ENCODE measurements at regions of chr5 and their contacts with region 1.

Region 1: DNA sequence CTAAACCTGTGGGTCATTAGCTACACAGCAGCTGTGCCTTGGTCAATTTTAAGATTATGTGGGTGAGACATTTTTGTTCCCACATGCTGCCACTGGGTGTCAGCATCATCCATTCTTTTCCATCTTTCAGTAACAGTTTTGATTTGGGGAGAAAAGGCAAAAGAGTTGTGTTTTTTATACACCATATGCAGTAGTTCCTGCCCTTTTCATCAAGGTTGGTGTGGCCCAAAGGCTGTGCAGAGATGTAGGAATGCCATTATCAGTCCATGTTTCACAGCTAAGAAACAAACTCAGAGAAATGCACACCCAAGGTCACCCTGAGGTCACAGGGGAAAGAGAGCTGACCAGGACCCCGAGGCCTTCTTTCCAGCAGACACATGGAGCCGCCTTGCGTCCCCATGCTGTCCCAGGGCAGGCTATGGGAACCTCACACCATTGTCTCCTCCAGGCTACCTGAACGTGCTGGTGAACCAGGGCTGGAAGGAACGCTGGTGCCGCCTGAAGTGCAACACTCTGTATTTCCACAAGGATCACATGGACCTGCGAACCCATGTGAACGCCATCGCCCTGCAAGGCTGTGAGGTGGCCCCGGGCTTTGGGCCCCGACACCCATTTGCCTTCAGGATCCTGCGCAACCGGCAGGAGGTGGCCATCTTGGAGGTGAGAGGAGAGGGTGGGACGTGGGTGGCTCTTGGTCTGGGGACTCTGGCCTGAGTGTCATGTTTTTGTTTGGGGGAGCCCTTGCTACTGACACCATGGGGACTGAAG is 27.8 kb upstream of the GRPEL2 start:
- DNase-seq: peak; percentile 76
- H3K4me3 ChIP-seq: no peak overlapping the region
- H3K27ac ChIP-seq: peak overlapping the region in 1 of 2 experiments; percentile 63; a peak in 2 of 4 replicates
- H3K4me1 ChIP-seq: peaks cover 13 to 20% of the 10 kb centered on the region in 2 experiments
- H3K27me3 ChIP-seq: no peaks in the 10 kb centered on the region
- CTCF ChIP-seq: peak; percentile 75
- EP300 ChIP-seq: no peak
- RAD21 ChIP-seq: peak; percentile 90

Region 2: DNA sequence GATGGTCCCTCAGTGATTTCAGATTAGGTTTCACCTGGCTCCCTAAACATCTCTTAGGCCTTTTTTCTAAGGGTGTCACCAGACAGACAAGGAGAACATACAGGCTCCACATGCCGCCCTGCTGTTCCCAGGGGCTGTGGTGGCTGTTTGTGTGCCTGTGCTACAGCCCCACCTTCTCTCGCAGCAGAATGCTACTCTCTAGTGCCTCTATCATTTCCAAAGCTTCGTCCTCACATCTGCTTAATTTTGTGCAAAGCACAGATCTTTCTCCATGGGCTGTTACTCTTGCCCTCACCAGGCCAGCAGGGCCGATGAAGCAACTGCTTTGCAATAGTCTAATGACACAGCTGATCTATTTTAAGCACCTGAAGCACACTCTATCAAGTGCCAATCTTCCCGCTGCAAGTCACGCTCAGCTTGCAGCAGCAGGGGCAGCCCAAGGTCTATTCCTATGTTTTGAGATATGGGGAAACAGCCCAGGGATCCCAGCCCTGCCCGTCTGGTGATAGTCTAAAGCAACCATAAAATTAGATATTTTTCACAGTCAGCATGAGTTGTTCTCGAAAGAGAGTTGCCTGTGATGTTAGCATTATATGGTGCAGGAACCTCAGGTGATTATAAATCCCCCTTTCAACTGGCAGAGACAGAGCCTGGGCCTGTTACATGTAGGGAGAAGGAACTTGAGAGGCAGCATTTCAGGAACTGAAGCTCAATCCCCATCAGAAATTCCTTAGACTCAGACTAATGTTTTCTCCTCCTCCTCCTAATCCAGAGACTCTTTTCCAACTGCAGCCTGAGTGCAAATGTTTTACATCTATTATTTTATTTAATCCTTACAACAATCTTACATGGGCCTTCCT is 163.5 kb before region 1 on chr5:
- CTCF ChIA-PET with region 1: no interaction called
- POLR2A ChIA-PET with region 1: no interaction called
- DNase-seq: no peak
- H3K4me3 ChIP-seq: no peak overlapping the region
- H3K27ac ChIP-seq: no peak overlapping the region
- H3K4me1 ChIP-seq: peaks cover 0 to 17% of the 10 kb centered on the region in 2 experiments
- H3K27me3 ChIP-seq: no peaks in the 10 kb centered on the region
- CTCF ChIP-seq: no peak
- EP300 ChIP-seq: no peak
- RAD21 ChIP-seq: no peak

Region 3: DNA sequence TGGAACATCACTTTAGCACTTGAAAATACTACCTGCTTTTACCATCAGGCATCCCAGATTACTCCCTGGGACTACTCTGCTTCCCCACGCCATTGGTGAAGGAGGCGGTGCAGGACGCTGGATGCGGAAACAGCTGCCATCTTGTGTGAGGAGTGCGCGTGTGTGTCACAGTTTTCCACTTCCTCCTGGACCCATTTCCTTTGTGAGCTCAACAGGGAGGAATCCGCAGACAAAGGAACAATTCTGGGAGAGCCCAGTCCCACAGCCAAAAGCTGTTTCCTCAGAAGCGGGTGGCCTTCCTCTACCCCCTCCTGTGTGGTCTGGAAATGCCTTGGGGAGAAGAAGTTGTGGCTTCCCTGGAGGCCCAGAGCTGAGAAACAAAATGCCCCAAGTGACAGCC is 29.0 kb before region 1 on chr5:
- CTCF ChIA-PET with region 1: no interaction called
- POLR2A ChIA-PET with region 1: no interaction called
- DNase-seq: no peak
- H3K4me3 ChIP-seq: no peak overlapping the region
- H3K27ac ChIP-seq: no peak overlapping the region
- H3K4me1 ChIP-seq: no peaks in the 10 kb centered on the region; a peak in 1 of 4 replicates
- H3K27me3 ChIP-seq: no peaks in the 10 kb centered on the region
- CTCF ChIP-seq: no peak
- EP300 ChIP-seq: no peak
- RAD21 ChIP-seq: no peak

Region 4: DNA sequence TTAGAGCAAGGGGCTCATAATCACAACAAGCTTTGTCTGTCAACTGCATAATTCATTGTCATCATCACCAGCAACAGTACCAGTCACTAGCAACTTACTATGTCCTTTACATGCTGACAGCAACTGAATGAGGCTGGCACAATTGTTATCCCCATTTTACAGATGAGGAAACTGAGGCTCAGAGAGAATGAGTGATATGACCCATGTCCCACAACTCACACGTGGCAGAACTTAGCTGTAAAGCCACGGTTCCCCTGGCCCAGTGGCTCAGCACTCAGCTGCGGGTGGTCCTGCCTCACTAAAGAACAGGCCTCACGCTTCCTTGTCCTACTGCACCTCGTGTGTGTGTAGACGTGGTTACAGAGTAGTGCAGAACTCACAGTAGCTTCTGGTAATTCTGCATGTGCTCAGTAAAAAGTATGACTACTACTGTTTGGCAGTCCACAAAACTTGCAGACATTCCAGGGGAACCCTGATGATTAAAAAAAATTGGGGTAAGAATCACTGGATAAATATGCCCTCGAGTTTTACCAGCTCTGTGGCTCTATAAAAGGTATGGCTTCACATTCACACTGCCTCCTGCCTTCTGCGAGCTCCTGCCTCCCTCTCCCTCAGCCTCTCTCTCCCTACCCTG is 15.6 kb before region 1 on chr5:
- CTCF ChIA-PET with region 1: interaction called, 29 read pairs
- POLR2A ChIA-PET with region 1: interaction called, 3 read pairs
- DNase-seq: no peak
- H3K4me3 ChIP-seq: no peak overlapping the region
- H3K27ac ChIP-seq: no peak overlapping the region
- H3K4me1 ChIP-seq: peaks cover 0 to 12% of the 10 kb centered on the region in 2 experiments; a peak in 1 of 4 replicates
- H3K27me3 ChIP-seq: no peaks in the 10 kb centered on the region
- CTCF ChIP-seq: no peak
- EP300 ChIP-seq: no peak
- RAD21 ChIP-seq: no peak

Region 5: DNA sequence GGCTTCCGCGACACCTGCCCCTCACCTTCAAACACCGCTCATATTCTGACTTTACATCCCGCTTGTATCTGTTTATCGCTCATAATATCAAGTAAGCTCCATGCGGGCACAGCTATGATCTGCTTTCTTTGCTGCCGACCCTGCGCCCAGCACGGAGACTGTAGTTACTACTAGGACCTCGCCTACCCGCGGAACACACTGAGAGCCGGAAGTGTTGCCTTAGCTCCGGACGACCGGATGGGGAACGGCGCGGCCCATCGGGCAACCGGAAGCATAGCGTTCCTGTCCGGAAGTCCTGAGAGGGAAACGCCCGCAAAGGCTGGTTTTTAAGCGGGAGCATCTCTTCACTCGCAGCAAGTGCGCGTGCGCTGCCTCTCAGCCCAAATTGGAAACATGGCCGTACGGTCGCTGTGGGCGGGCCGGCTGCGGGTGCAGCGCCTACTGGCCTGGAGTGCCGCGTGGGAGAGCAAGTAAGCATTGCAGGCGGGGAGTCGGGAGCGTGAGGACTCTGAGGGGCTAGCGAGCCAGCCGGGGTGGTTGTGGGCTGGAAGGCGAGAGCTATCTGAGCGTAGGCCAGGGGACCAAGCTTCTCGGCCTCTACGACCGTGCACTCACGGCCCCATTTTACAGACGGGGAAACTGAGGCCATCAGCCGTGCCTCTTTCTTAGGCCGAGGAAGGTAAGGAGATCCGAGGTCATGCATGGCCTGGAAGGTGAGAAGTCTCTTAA is 27.8 kb after region 1 on chr5 and contains the start of gene GRPEL2:
- CTCF ChIA-PET with region 1: interaction called, 12 read pairs
- POLR2A ChIA-PET with region 1: interaction called, 33 read pairs
- DNase-seq: peak; percentile 92
- H3K4me3 ChIP-seq: peak within 1 kb of the TSS; percentile 94 to 100
- H3K27ac ChIP-seq: peak within 1 kb of the TSS; percentile 70 to 97
- H3K4me1 ChIP-seq: peaks cover 0 to 15% of the 10 kb centered on the region in 2 experiments; a peak in 3 of 4 replicates
- H3K27me3 ChIP-seq: no peaks in the 10 kb centered on the region
- CTCF ChIP-seq: no peak
- EP300 ChIP-seq: no peak
- RAD21 ChIP-seq: no peak
- polyA plus RNA-seq, gene GRPEL2: 4.6 and 6.0 TPM in 2 replicates

Region 6: GRCh38 chr5:149357370-149358293 is 40.2 kb after region 1 on chr5 and contains the start of gene PCYOX1L:
- CTCF ChIA-PET with region 1: interaction called, 120 read pairs
- POLR2A ChIA-PET with region 1: interaction called, 12 read pairs
- DNase-seq: peak; percentile 98
- H3K4me3 ChIP-seq: peak within 1 kb of the TSS; percentile 62 to 85
- H3K27ac ChIP-seq: peak within 1 kb of the TSS in 1 of 2 experiments; percentile 84; a peak in 2 of 4 replicates
- H3K4me1 ChIP-seq: peaks cover 0 to 12% of the 10 kb centered on the region in 2 experiments; a peak in 1 of 4 replicates
- H3K27me3 ChIP-seq: no peaks in the 10 kb centered on the region
- CTCF ChIP-seq: no peak
- EP300 ChIP-seq: no peak
- RAD21 ChIP-seq: no peak
- polyA plus RNA-seq, gene PCYOX1L: 17.4 and 17.5 TPM in 2 replicates

Region 7: GRCh38 chr5:149381987-149382340 is 64.5 kb after region 1 on chr5:
- CTCF ChIA-PET with region 1: interaction called, 87 read pairs
- POLR2A ChIA-PET with region 1: no interaction called
- DNase-seq: peak; percentile 93
- H3K4me3 ChIP-seq: no peak overlapping the region; a peak in 1 of 4 replicates
- H3K27ac ChIP-seq: peak overlapping the region in 1 of 2 experiments; percentile 73; a peak in 1 of 4 replicates
- H3K4me1 ChIP-seq: peaks cover 0 to 48% of the 10 kb centered on the region in 2 experiments; a peak in 1 of 4 replicates
- H3K27me3 ChIP-seq: no peaks in the 10 kb centered on the region
- CTCF ChIP-seq: peak; percentile 91
- EP300 ChIP-seq: no peak
- RAD21 ChIP-seq: peak; percentile 94

Region 8: GRCh38 chr5:149561848-149562247 is 244.4 kb after region 1 on chr5:
- CTCF ChIA-PET with region 1: interaction called, 23 read pairs
- POLR2A ChIA-PET with region 1: no interaction called
- DNase-seq: peak; percentile 50
- H3K4me3 ChIP-seq: peak overlapping the region; percentile 19 to 42; a peak in 3 of 4 replicates
- H3K27ac ChIP-seq: peak overlapping the region; percentile 88 to 98
- H3K4me1 ChIP-seq: peaks cover 10 to 28% of the 10 kb centered on the region in 2 experiments
- H3K27me3 ChIP-seq: no peaks in the 10 kb centered on the region
- CTCF ChIP-seq: no peak
- EP300 ChIP-seq: peak; percentile 39 to 83; a peak in 3 of 4 replicates
- RAD21 ChIP-seq: no peak

Region 9: DNA sequence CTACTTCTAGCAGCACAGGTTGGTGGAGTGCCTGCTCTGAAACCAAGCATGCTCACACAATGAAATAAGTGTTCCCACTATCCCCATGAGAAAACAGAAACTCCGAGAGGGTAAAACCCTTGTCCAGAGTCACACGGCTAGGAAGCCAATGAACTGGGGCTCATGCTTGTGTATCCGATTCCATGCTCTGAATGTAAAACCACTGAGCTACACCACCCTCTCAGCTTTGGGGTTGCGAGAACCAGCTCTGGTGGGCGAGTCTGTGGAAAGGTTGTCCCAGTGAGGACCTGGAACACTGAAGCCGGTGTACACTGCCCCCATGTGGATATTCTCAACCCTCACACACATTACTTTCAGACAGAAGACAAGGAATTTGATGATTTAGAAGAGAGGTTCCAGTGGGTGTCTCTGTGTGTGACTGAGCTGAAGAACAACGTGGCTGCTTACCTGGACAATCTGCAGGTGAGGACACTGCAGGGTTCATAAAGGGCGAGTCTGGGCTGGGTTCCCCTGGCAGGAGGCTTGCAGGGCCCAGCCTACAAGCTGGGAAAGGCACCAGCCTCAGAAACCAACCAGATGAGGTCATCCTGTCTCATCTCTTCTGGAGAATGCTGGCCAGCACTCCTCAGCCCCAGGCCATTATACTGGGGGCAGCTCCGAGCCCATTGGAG is 301.3 kb after region 1 on chr5:
- CTCF ChIA-PET with region 1: interaction called, 10 read pairs
- POLR2A ChIA-PET with region 1: interaction called, 3 read pairs
- DNase-seq: peak; percentile 78
- H3K4me3 ChIP-seq: no peak overlapping the region; a peak in 1 of 4 replicates
- H3K27ac ChIP-seq: no peak overlapping the region
- H3K4me1 ChIP-seq: peaks cover 5 to 14% of the 10 kb centered on the region in 2 experiments; a peak in 1 of 4 replicates
- H3K27me3 ChIP-seq: no peaks in the 10 kb centered on the region
- CTCF ChIP-seq: peak; percentile 79
- EP300 ChIP-seq: no peak
- RAD21 ChIP-seq: peak; percentile 80

Measured in SK-N-SH (cell line).